ENCODE measurements at regions of chr1 and their contacts with region 1.

Region 1: GRCh38 chr1:63148825-63149645 is 173.3 kb upstream of the FOXD3 start:
- DNase-seq: peak; percentile 40
- H3K4me3 ChIP-seq: no peak overlapping the region
- H3K27ac ChIP-seq: no peak overlapping the region
- H3K4me1 ChIP-seq: no peaks in the 10 kb centered on the region
- H3K27me3 ChIP-seq: peaks cover 6 to 8% of the 10 kb centered on the region in 2 experiments
- CTCF ChIP-seq: peak; percentile 65 to 66
- POLR2A ChIP-seq: no peak

Region 2: DNA sequence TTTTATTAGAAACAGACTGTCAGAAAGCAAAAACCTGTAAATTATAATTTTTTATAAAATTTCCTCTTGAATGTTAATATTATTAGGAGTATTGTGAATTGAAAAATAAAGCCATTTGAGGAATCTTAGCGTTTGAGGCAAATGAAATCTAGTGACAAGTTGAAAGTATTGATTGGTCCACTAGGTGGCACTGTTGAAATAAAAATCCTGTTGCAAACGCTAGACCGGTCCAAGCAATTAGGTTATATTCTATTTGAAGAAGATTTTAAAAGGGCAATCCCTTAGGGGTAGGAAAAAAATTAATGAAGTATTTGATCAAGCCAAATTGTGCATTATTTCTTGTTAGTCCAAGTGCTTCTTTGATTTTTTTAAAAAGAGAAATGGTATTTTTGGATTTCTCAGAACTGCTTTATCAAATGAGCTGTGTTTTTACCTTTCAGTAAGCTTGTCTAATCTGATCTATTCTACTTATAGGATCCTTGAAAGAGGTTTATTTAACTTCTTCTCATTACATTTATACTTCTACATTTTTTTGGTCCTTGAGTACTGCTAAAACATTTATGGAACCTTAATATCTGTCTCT is 307.4 kb before region 1 on chr1:
- CTCF ChIA-PET with region 1: interaction called, 98 read pairs
- POLR2A ChIA-PET with region 1: no interaction called
- dilution Hi-C with region 1: no loop called
- intact Hi-C with region 1: loop called (anchors 1 kb)
- DNase-seq: peak; percentile 70
- H3K4me3 ChIP-seq: no peak overlapping the region
- H3K27ac ChIP-seq: no peak overlapping the region
- H3K4me1 ChIP-seq: no peaks in the 10 kb centered on the region
- H3K27me3 ChIP-seq: no peaks in the 10 kb centered on the region
- CTCF ChIP-seq: peak; percentile 35 to 37
- POLR2A ChIP-seq: no peak

Region 3: GRCh38 chr1:62962901-62963776 is 185.9 kb before region 1 on chr1:
- CTCF ChIA-PET with region 1: interaction called, 57 read pairs
- POLR2A ChIA-PET with region 1: no interaction called
- dilution Hi-C with region 1: no loop called
- intact Hi-C with region 1: loop called (anchors 1 kb)
- DNase-seq: peak; percentile 29
- H3K4me3 ChIP-seq: no peak overlapping the region
- H3K27ac ChIP-seq: no peak overlapping the region
- H3K4me1 ChIP-seq: no peaks in the 10 kb centered on the region
- H3K27me3 ChIP-seq: no peaks in the 10 kb centered on the region
- CTCF ChIP-seq: peak; percentile 51 to 67
- POLR2A ChIP-seq: no peak

Region 4: GRCh38 chr1:63004868-63005267 is 144.2 kb before region 1 on chr1:
- CTCF ChIA-PET with region 1: interaction called, 31 read pairs
- POLR2A ChIA-PET with region 1: no interaction called
- dilution Hi-C with region 1: no loop called
- intact Hi-C with region 1: loop called (anchors 1 kb)
- DNase-seq: no peak
- H3K4me3 ChIP-seq: no peak overlapping the region
- H3K27ac ChIP-seq: no peak overlapping the region
- H3K4me1 ChIP-seq: no peaks in the 10 kb centered on the region
- H3K27me3 ChIP-seq: peaks cover 0 to 5% of the 10 kb centered on the region in 2 experiments
- CTCF ChIP-seq: no peak
- POLR2A ChIP-seq: no peak

Region 5: GRCh38 chr1:63112155-63112900 is 36.7 kb before region 1 on chr1:
- CTCF ChIA-PET with region 1: interaction called, 11 read pairs
- POLR2A ChIA-PET with region 1: no interaction called
- dilution Hi-C with region 1: no loop called
- intact Hi-C with region 1: no loop called
- DNase-seq: no peak
- H3K4me3 ChIP-seq: no peak overlapping the region
- H3K27ac ChIP-seq: no peak overlapping the region
- H3K4me1 ChIP-seq: no peaks in the 10 kb centered on the region
- H3K27me3 ChIP-seq: peaks cover 8 to 26% of the 10 kb centered on the region in 2 experiments
- CTCF ChIP-seq: no peak
- POLR2A ChIP-seq: no peak

Region 6: GRCh38 chr1:63214553-63214952 is 65.5 kb after region 1 on chr1:
- CTCF ChIA-PET with region 1: no interaction called
- POLR2A ChIA-PET with region 1: no interaction called
- dilution Hi-C with region 1: no loop called
- intact Hi-C with region 1: no loop called
- DNase-seq: no peak
- H3K4me3 ChIP-seq: no peak overlapping the region
- H3K27ac ChIP-seq: no peak overlapping the region
- H3K4me1 ChIP-seq: no peaks in the 10 kb centered on the region
- H3K27me3 ChIP-seq: no peaks in the 10 kb centered on the region
- CTCF ChIP-seq: no peak
- POLR2A ChIP-seq: no peak

Measured in endothelial cell of umbilical vein (primary cell).